Colonic mucosa (tissue), 4 donors: ENCODE measurements at regions of chr1 and their contacts with region 1.

Region 1: GRCh38 chr1:173986951-173987350 is 35.2 kb downstream of the RC3H1 start:
- DNase-seq: no peak
- H3K4me3 ChIP-seq: no peak overlapping the region
- H3K27ac ChIP-seq: no peak overlapping the region
- H3K4me1 ChIP-seq: no peaks in the 10 kb centered on the region
- H3K27me3 ChIP-seq: no peaks in the 10 kb centered on the region
- CTCF ChIP-seq: no peak

Region 2: DNA sequence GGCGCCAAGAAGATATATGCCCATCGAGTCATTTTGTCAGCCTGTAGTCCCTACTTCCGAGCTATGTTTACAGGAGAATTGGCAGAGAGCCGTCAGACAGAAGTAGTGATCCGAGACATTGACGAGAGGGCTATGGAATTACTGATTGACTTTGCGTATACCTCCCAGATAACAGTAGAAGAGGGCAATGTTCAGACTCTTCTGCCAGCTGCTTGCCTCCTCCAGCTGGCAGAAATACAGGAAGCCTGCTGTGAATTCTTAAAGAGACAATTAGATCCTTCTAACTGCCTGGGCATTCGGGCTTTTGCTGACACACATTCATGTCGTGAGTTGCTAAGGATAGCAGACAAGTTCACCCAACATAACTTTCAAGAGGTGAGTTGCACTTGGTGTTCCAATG is 253.0 kb before region 1 on chr1:
- intact Hi-C with region 1: no loop called
- DNase-seq: no peak
- H3K4me3 ChIP-seq: no peak overlapping the region
- H3K27ac ChIP-seq: no peak overlapping the region
- H3K4me1 ChIP-seq: no peaks in the 10 kb centered on the region
- H3K27me3 ChIP-seq: no peaks in the 10 kb centered on the region
- CTCF ChIP-seq: no peak

Region 3: GRCh38 chr1:173946380-173946921 is 40.5 kb before region 1 on chr1:
- intact Hi-C with region 1: loop called (anchors 5 kb)
- DNase-seq: no peak
- H3K4me3 ChIP-seq: no peak overlapping the region
- H3K27ac ChIP-seq: no peak overlapping the region
- H3K4me1 ChIP-seq: no peaks in the 10 kb centered on the region
- H3K27me3 ChIP-seq: no peaks in the 10 kb centered on the region
- CTCF ChIP-seq: no peak

Region 4: DNA sequence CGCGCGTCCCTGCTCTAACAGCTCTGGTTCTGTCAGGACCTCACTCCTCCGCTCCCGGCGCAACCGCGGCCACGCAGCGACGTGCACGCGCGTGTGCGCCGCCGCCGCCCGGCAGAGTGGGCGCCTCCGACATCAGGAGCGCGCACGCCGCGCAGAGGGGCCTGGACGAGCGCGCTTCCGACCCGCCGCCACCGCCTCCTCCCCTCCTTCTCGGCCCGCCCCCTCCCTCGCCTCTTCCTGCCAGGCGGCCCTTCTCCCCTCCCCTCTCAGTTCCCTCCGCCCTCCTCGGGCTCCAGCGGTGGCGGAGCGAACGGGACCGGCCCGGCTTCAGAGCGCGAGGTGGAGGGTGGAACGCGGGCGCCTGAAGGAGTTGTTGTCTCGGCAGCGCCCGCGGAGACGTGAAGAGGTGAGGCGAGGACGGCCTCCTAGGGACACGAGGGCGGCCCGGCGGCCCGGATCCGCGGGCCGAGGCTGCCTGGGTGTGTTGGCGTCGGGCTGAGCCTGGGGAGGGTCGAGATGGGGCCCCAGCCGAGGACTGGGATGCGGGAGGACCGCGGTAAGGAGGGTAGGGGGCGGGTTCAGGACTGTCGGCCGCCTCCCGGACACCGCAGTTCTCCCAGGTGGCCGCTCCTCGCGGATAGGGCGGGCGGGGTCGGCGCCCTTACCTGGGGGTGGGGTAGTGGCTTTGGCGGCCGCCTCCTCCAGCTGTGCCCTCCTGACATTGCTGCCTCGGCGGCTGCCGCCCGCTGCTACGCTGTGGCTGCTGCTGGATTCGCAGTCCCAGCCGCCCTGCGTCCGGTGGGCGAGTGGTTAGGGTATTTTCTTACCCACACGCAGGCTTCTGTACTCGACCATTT is 172.5 kb after region 1 on chr1 and contains the start of gene RABGAP1L:
- intact Hi-C with region 1: no loop called
- DNase-seq: peak; percentile 94
- H3K4me3 ChIP-seq: peak within 1 kb of the TSS; percentile 96
- H3K27ac ChIP-seq: peak within 1 kb of the TSS; percentile 99
- H3K4me1 ChIP-seq: peaks cover 4% of the 10 kb centered on the region
- H3K27me3 ChIP-seq: no peaks in the 10 kb centered on the region
- CTCF ChIP-seq: no peak
- total RNA-seq, gene RABGAP1L: 50.3 to 87.0 TPM